Calu3 (cell line): ENCODE measurements at regions of chr6 and their contacts with region 1.

Region 1: GRCh38 chr6:143940011-143940597 is 68.0 kb downstream of the PLAGL1 start:
- DNase-seq: peak; percentile 64
- H3K4me3 Mint-ChIP-seq: no peak overlapping the region
- H3K27ac Mint-ChIP-seq: no peak overlapping the region
- H3K4me1 Mint-ChIP-seq: no peaks in the 10 kb centered on the region
- H3K27me3 Mint-ChIP-seq: no peaks in the 10 kb centered on the region
- CTCF ChIP-seq: peak; percentile 31

Region 2: GRCh38 chr6:143759666-143760065 is 180.4 kb before region 1 on chr6:
- CTCF ChIA-PET with region 1: no interaction called
- intact Hi-C with region 1: no loop called
- DNase-seq: no peak
- H3K4me3 Mint-ChIP-seq: no peak overlapping the region
- H3K27ac Mint-ChIP-seq: no peak overlapping the region
- H3K4me1 Mint-ChIP-seq: no peaks in the 10 kb centered on the region
- H3K27me3 Mint-ChIP-seq: no peaks in the 10 kb centered on the region
- CTCF ChIP-seq: no peak

Region 3: DNA sequence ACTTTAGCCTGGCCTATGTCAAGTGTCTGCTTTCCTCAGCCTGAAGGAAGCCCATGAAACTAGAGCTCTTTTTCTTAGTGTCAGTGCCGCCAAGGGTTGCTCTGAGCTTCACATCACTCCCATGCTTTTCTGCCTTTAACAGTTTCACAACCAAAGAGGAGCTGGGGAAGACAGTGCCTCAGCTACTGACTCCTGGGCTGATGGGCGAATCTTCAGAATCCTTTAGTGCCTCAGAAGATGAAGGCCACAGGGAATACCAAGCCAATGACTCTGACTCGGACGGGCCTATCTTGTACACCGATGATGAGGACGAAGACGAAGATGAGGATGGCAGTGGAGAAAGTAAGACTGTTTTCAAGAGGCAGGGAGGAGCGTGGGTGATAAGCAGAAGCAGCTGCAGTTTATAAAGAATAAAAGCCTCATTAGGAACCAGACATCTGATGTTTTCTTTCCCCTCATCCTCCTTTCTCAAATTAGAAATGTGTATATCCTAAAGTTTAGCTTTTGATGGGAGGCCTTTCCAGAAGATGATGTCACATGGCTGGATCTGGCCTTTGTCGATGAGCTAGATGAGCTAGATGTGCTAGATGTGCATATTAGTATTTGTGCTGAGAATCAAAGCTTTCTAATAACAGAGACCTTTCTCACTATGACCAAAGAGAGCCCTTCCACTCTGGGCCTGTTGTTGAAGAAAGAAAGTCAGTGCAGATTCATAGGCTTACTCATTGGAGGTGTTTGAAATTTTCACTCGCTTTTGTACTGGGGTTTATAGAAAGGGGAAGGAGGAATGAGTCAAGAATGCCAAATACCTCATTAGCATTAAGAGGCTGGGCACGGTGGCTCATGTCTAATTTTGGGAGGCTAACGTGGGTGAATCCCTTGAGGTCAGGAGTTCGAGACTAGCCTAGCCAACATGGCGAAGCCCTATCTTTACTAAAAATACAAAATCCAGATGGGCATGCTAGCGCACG is 167.7 kb before region 1 on chr6:
- CTCF ChIA-PET with region 1: no interaction called
- intact Hi-C with region 1: no loop called
- DNase-seq: no peak
- H3K4me3 Mint-ChIP-seq: no peak overlapping the region
- H3K27ac Mint-ChIP-seq: no peak overlapping the region
- H3K4me1 Mint-ChIP-seq: no peaks in the 10 kb centered on the region
- H3K27me3 Mint-ChIP-seq: no peaks in the 10 kb centered on the region
- CTCF ChIP-seq: no peak

Region 4: GRCh38 chr6:143928853-143929252 is 11.3 kb before region 1 on chr6:
- CTCF ChIA-PET with region 1: no interaction called
- intact Hi-C with region 1: no loop called
- DNase-seq: no peak
- H3K4me3 Mint-ChIP-seq: no peak overlapping the region
- H3K27ac Mint-ChIP-seq: no peak overlapping the region
- H3K4me1 Mint-ChIP-seq: no peaks in the 10 kb centered on the region
- H3K27me3 Mint-ChIP-seq: peaks cover 44% of the 10 kb centered on the region
- CTCF ChIP-seq: no peak

Region 5: GRCh38 chr6:144013486-144013909 is 73.4 kb after region 1 on chr6:
- CTCF ChIA-PET with region 1: interaction called, 5 read pairs
- intact Hi-C with region 1: loop called (anchors 1 kb)
- DNase-seq: peak; percentile 65
- H3K4me3 Mint-ChIP-seq: no peak overlapping the region
- H3K27ac Mint-ChIP-seq: no peak overlapping the region
- H3K4me1 Mint-ChIP-seq: peaks cover 10% of the 10 kb centered on the region
- H3K27me3 Mint-ChIP-seq: no peaks in the 10 kb centered on the region
- CTCF ChIP-seq: peak; percentile 71

Region 6: GRCh38 chr6:144095331-144096002 is 155.4 kb after region 1 on chr6 and contains the start of gene SF3B5:
- CTCF ChIA-PET with region 1: no interaction called
- intact Hi-C with region 1: loop called (anchors 10 kb)
- DNase-seq: peak; percentile 91
- H3K4me3 Mint-ChIP-seq: peak within 1 kb of the TSS; percentile 79
- H3K27ac Mint-ChIP-seq: peak within 1 kb of the TSS; percentile 91
- H3K4me1 Mint-ChIP-seq: peaks cover 8% of the 10 kb centered on the region
- H3K27me3 Mint-ChIP-seq: no peaks in the 10 kb centered on the region
- CTCF ChIP-seq: no peak
- total RNA-seq, gene SF3B5: 104 and 113 TPM in 2 replicates

Region 7: GRCh38 chr6:144283629-144284477 is 343.7 kb after region 1 on chr6:
- CTCF ChIA-PET with region 1: no interaction called
- intact Hi-C with region 1: no loop called
- DNase-seq: no peak
- H3K4me3 Mint-ChIP-seq: peak overlapping the region; percentile 93
- H3K27ac Mint-ChIP-seq: peak overlapping the region; percentile 67
- H3K4me1 Mint-ChIP-seq: no peaks in the 10 kb centered on the region
- H3K27me3 Mint-ChIP-seq: no peaks in the 10 kb centered on the region
- CTCF ChIP-seq: no peak